ENCODE measurements at regions of chr12 and their contacts with region 1.

Region 1: GRCh38 chr12:65156366-65156841 is 13.0 kb upstream of the LEMD3 start:
- DNase-seq: no peak

Region 2: DNA sequence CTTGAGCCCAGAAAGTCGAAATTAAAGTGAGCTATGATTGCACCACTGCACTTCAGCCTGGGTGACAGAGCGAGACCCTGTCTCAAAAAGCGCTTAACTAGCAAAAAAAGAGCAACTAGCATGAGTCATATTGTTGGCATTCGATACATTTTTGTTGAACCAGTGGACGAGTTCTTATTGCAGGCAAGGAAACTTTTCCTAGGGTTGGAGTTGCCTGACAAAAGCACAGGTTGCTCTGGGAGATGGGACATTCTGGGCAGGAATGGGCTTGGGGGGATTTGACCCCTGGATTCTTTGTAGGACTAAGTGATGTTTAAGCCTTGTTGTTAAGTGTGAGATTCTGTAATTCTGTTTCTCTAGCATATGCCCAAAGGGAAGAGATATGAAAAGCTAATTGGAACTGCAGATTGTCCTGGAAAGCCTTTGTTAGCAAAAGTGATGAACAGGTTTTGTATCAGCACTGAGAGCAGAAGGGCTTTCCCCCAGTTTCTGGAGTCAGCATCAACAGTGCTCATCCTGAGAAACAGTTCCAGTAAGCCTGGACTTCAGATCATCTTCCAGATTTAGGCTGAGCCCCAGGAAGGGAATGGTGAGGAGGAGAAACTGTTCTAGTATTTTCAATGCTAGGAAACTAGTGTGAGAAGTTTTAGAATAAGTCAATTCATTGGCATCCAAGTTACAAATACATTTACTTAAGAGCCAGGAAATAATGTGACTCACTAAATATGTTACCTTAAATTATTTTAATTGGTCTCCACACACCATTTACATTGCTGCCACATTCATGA is 1188.9 kb before region 1 on chr12:
- intact Hi-C with region 1: loop called in 1 of 2 experiments (anchors 10 kb)
- DNase-seq: no peak

Region 3: DNA sequence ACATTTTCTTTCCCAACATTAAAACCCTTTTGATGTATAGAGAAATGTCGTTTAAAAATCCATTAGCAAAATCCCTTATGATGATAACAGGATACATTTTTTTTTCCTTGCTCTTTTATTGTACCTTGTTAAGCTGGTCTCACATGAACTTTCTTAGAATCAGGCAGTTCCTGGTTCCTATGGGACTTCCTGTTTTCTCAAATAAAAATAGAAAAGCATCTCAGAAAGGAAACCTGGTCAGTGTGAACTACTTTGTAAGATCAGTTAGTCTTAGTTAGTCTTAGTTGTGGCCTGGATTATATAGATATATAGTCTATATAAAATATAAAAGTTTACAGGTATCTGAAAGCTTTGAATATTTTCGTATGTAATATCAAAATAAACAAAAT is 53.2 kb after region 1 on chr12:
- intact Hi-C with region 1: no loop called
- DNase-seq: no peak